Endothelial cell of umbilical vein (primary cell): ENCODE measurements at regions of chr20 and their contacts with region 1.

Region 1: DNA sequence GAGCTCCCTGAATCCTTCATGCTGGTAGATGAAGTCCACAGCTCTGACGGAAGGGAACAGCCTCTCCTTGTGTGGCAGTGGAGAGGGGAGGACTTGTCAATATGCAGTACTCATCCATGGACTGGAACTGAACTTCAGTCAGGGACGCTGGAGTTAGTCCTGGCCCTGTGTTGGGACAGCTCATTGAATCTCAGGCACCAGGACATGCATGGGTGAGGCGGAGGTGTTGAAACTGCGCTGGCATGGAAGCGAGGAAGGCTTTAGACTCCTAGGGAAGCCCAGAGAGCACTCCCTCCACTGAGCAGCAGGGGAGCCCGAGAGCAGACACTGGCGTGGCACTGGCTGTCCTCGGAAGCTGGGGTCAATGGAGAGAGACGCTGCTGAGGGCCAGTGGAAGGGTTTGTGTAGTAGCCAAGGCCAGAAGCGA is 161.3 kb upstream of the GGTLC1 start:
- DNase-seq: no peak
- H3K4me3 ChIP-seq: no peak overlapping the region
- H3K27ac ChIP-seq: no peak overlapping the region
- H3K4me1 ChIP-seq: no peaks in the 10 kb centered on the region
- H3K27me3 ChIP-seq: peaks cover 0 to 2% of the 10 kb centered on the region in 2 experiments
- CTCF ChIP-seq: peak; percentile 24 to 66
- POLR2A ChIP-seq: no peak

Region 2: GRCh38 chr20:24194137-24194536 is 44.2 kb after region 1 on chr20:
- CTCF ChIA-PET with region 1: no interaction called
- POLR2A ChIA-PET with region 1: no interaction called
- dilution Hi-C with region 1: no loop called
- intact Hi-C with region 1: no loop called
- DNase-seq: no peak
- H3K4me3 ChIP-seq: no peak overlapping the region
- H3K27ac ChIP-seq: no peak overlapping the region
- H3K4me1 ChIP-seq: no peaks in the 10 kb centered on the region
- H3K27me3 ChIP-seq: no peaks in the 10 kb centered on the region
- CTCF ChIP-seq: no peak
- POLR2A ChIP-seq: no peak

Region 3: DNA sequence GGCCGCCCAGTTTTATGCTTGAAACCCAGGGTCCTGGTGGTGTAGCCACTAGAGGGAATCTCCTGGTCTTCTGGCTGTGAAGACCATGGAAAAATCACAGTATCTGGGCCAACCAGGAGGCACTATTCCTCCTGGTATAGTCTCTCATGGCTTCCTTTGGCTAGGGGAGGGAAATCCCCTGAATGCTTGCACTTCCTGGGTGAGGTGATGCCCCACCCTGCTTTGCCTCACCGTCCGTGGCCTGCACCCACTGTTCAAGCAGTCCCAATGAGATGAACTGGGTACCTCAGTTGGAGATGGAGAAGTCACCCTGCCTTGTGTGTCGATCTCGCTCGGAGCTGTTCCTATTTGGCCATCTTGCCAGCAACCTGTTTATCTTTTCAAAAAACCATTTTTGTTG is 1556.9 kb after region 1 on chr20:
- CTCF ChIA-PET with region 1: no interaction called
- POLR2A ChIA-PET with region 1: no interaction called
- dilution Hi-C with region 1: no loop called
- intact Hi-C with region 1: loop called (anchors 10 kb)
- DNase-seq: no peak
- H3K4me3 ChIP-seq: no peak overlapping the region
- H3K27ac ChIP-seq: no peak overlapping the region
- H3K4me1 ChIP-seq: no peaks in the 10 kb centered on the region
- H3K27me3 ChIP-seq: no peaks in the 10 kb centered on the region
- CTCF ChIP-seq: no peak
- POLR2A ChIP-seq: no peak